ENCODE measurements at regions of chr12 and their contacts with region 1.

Region 1: GRCh38 chr12:12716793-12717585 is at the start of gene CDKN1B:
- DNase-seq: peak; percentile 76 to 92
- ATAC-seq: peak; percentile 68 to 85 (median 78)
- H3K4me3 ChIP-seq: peak within 1 kb of the TSS; percentile 100
- H3K4me3 Mint-ChIP-seq: peak within 1 kb of the TSS; percentile 98
- H3K27ac ChIP-seq: peak within 1 kb of the TSS; percentile 99
- H3K27ac Mint-ChIP-seq: peak within 1 kb of the TSS; percentile 99 to 100
- H3K4me1 ChIP-seq: peaks cover 41% of the 10 kb centered on the region
- H3K4me1 Mint-ChIP-seq: peaks cover 78 to 80% of the 10 kb centered on the region in 2 donors
- H3K27me3 ChIP-seq: no peaks in the 10 kb centered on the region
- H3K27me3 Mint-ChIP-seq: no peaks in the 10 kb centered on the region
- CTCF ChIP-seq: no peak
- total RNA-seq, gene CDKN1B: 119 to 207 (median 130) TPM

Region 2: GRCh38 chr12:11758510-11759493 is 958.2 kb before region 1 on chr12:
- intact Hi-C with region 1: no loop called
- DNase-seq: peak in 1 of 2 donors; percentile 15
- ATAC-seq: no peak
- H3K4me3 ChIP-seq: no peak overlapping the region
- H3K4me3 Mint-ChIP-seq: no peak overlapping the region
- H3K27ac ChIP-seq: peak overlapping the region; percentile 30
- H3K27ac Mint-ChIP-seq: peak overlapping the region in 1 of 2 donors; percentile 11
- H3K4me1 ChIP-seq: peaks cover 25% of the 10 kb centered on the region
- H3K4me1 Mint-ChIP-seq: peaks cover 10 to 14% of the 10 kb centered on the region in 2 donors
- H3K27me3 ChIP-seq: no peaks in the 10 kb centered on the region
- H3K27me3 Mint-ChIP-seq: no peaks in the 10 kb centered on the region
- CTCF ChIP-seq: no peak

Region 3: GRCh38 chr12:12356886-12357718 is 359.9 kb before region 1 on chr12 and contains the start of gene BORCS5:
- intact Hi-C with region 1: loop called (anchors 2 kb)
- DNase-seq: peak; percentile 95 to 99
- ATAC-seq: peak; percentile 92 to 98 (median 94)
- H3K4me3 ChIP-seq: peak within 1 kb of the TSS; percentile 78
- H3K4me3 Mint-ChIP-seq: peak within 1 kb of the TSS; percentile 96
- H3K27ac ChIP-seq: peak within 1 kb of the TSS; percentile 97
- H3K27ac Mint-ChIP-seq: peak within 1 kb of the TSS; percentile 92 to 97
- H3K4me1 ChIP-seq: peaks cover 23% of the 10 kb centered on the region
- H3K4me1 Mint-ChIP-seq: peaks cover 26 to 31% of the 10 kb centered on the region in 2 donors
- H3K27me3 ChIP-seq: no peaks in the 10 kb centered on the region
- H3K27me3 Mint-ChIP-seq: no peaks in the 10 kb centered on the region
- CTCF ChIP-seq: no peak
- total RNA-seq, gene BORCS5: 28.5 to 32.8 (median 29.2) TPM

Region 4: DNA sequence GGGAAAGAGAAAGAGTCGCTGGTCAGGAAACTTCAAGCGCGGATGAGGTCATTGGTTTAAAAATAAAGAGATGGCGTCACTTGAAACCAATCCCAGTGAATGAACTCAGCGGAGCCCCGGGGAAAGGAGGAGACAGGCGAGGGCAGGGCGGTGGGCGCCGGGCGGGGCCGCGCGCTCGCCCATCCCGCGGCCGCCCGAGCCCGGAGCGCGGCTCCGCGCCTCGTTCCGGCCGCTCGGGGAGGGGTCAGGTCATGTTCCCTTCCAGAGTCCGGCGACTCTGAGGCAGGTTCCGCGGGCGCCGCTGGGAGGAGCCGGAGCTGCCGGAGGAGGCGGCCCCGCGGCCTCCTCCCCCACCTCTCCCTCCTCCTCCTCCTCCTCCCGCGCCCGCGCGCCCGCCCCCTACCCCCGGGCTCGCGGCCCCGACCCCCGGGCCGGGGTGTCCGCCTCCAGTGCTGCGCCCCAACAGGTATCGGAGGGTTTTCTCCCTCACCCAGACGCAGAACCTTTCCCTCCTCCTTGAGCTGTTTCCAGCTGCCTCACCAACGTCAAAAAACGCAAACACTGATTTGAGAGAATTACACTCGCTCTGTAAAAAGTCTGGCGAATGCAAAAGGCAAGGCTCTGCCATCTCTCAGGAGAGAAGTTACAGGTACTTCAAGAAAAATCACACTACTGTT is 154.3 kb before region 1 on chr12 and contains the start of gene DUSP16:
- intact Hi-C with region 1: loop called (anchors 5 kb)
- DNase-seq: peak; percentile 74 to 93
- ATAC-seq: peak; percentile 74 to 92 (median 84)
- H3K4me3 ChIP-seq: peak within 1 kb of the TSS; percentile 67
- H3K4me3 Mint-ChIP-seq: peak within 1 kb of the TSS; percentile 95
- H3K27ac ChIP-seq: peak within 1 kb of the TSS; percentile 88
- H3K27ac Mint-ChIP-seq: peak within 1 kb of the TSS; percentile 90 to 96
- H3K4me1 ChIP-seq: peaks cover 10% of the 10 kb centered on the region
- H3K4me1 Mint-ChIP-seq: peaks cover 10 to 13% of the 10 kb centered on the region in 2 donors
- H3K27me3 ChIP-seq: no peaks in the 10 kb centered on the region
- H3K27me3 Mint-ChIP-seq: peaks cover 0 to 3% of the 10 kb centered on the region in 2 donors
- CTCF ChIP-seq: no peak
- total RNA-seq, gene DUSP16: 6.9 to 19.9 (median 10.0) TPM

Region 5: DNA sequence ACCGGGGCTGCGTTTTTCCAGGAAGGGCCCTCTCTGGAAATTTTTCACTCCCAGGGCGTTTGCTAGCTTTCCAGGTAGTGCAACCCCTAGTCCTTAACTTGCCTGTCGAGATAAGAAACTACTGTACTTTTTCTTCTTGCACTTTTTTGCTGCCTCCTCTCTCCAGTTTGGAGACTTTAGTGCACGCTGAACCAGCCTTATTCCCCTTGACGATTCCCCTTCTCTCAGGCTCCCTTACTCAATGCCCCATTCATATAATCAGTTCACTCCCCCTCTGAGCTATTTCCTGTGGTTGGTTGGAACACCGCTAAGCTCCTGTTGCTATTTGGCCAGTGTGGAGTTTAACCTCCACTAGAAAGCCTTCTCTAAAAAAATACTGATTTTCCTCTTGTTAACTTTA is 104.6 kb before region 1 on chr12:
- intact Hi-C with region 1: no loop called
- DNase-seq: peak in 1 of 2 donors; percentile 64
- ATAC-seq: no peak
- H3K4me3 ChIP-seq: peak overlapping the region; percentile 84
- H3K4me3 Mint-ChIP-seq: peak overlapping the region; percentile 90
- H3K27ac ChIP-seq: peak overlapping the region; percentile 87
- H3K27ac Mint-ChIP-seq: peak overlapping the region; percentile 90 to 98
- H3K4me1 ChIP-seq: peaks cover 17% of the 10 kb centered on the region
- H3K4me1 Mint-ChIP-seq: peaks cover 38 to 42% of the 10 kb centered on the region in 2 donors
- H3K27me3 ChIP-seq: no peaks in the 10 kb centered on the region
- H3K27me3 Mint-ChIP-seq: no peaks in the 10 kb centered on the region
- CTCF ChIP-seq: no peak

Region 6: GRCh38 chr12:12704593-12705230 is 12.3 kb before region 1 on chr12:
- intact Hi-C with region 1: no loop called
- DNase-seq: peak in 1 of 2 donors; percentile 80
- ATAC-seq: peak; percentile 90 to 99 (median 93)
- H3K4me3 ChIP-seq: no peak overlapping the region
- H3K4me3 Mint-ChIP-seq: peak overlapping the region; percentile 62
- H3K27ac ChIP-seq: no peak overlapping the region
- H3K27ac Mint-ChIP-seq: peak overlapping the region; percentile 68 to 77
- H3K4me1 ChIP-seq: peaks cover 23% of the 10 kb centered on the region
- H3K4me1 Mint-ChIP-seq: peaks cover 15 to 17% of the 10 kb centered on the region in 2 donors
- H3K27me3 ChIP-seq: no peaks in the 10 kb centered on the region
- H3K27me3 Mint-ChIP-seq: no peaks in the 10 kb centered on the region
- CTCF ChIP-seq: peak; percentile 82

Region 7: DNA sequence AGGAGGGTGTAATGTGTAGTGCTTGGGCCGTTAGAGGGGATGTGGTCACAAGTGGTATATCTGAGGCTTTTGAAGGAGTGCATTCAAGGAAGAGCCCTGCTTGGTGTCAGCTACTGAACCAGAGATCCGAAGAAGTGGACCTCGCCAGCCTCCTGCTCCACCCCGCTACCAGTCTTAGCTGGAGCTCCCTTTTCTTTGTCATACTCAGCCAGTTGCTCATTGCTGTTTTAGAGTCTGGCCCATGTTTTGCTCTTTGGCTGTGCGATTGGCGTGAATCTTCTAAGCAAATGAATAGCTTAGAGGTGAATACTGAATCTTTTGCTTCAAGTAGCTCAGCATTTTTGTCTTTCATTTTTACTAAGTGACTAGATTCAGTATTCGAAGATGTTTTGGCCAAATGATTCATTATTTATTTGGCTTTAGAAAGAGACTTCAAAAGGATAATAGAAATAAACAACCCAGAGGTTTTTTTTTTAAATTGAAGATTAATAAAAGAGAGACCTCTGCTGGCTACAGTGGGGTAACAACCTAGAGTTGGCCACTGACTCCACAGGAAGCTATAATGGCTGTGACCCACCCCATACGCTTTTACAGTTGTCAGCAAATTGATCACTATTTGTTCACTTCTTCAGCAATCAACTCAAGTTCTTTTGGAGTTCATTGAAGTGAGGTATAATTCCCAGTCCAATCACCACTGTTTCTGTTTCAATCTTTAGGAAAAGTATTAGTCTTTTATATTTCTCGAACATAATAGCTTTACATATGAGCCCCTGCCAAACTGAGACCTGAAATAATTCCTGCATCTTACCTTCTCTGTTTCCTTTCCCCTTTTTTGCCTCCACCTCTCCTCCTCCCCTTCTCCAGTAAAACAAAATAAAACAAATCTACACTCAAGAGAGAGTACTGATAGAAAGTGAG is 20.0 kb after region 1 on chr12:
- intact Hi-C with region 1: loop called (anchors 1 kb)
- DNase-seq: peak; percentile 59 to 80
- ATAC-seq: peak; percentile 85 to 93 (median 91)
- H3K4me3 ChIP-seq: peak overlapping the region; percentile 43
- H3K4me3 Mint-ChIP-seq: peak overlapping the region; percentile 77
- H3K27ac ChIP-seq: peak overlapping the region; percentile 92
- H3K27ac Mint-ChIP-seq: peak overlapping the region; percentile 94
- H3K4me1 ChIP-seq: peaks cover 30% of the 10 kb centered on the region
- H3K4me1 Mint-ChIP-seq: peaks cover 31% of the 10 kb centered on the region in 2 donors
- H3K27me3 ChIP-seq: no peaks in the 10 kb centered on the region
- H3K27me3 Mint-ChIP-seq: no peaks in the 10 kb centered on the region
- CTCF ChIP-seq: peak; percentile 73

Region 8: DNA sequence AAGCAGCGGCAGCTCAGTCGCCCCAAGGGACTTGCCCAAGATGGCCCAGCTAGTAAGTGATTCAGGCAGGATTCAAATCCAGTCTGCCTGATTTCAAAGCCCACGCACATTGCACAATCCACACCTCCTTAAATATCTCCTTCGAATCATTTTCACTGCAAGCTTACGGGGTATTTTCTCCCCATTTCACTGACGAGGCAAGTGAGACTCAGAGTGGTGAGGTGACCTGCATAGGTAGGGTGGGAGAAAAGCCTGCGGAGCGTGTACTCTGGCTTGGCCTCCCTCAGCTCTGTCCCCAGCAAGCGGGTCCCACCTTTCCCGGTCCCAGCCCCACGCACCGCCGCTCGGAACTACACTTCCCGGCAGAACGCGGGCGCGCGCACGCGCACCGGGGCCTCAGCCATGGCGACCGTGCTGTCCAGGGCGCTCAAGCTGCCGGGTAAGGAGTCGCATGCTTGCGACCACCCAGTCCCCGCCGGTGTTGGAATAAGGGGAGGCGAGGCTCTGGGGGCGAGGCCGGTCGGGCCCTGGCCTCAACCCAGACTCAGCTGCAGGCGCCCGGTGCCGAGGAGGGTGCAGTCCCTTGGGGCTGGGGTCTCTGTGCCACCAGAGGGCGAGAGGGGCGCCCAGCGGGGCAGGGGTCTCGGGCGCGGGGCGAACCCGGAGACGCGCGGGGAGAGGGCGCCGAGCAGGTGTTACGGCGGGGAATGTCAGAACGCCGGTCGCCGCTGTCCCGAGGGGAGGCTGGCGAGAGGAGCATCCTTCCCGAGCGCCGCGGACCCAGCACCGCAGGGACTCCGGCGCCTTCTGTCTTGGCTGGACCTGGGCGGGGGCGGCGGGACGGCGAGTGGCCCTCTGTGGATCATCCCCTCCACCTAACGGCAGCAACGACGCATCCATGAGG is 327.3 kb after region 1 on chr12 and contains the start of gene FAM234B:
- intact Hi-C with region 1: no loop called
- DNase-seq: peak; percentile 60 to 83
- ATAC-seq: peak; percentile 88 to 99 (median 95)
- H3K4me3 ChIP-seq: peak within 1 kb of the TSS; percentile 94
- H3K4me3 Mint-ChIP-seq: peak within 1 kb of the TSS; percentile 89
- H3K27ac ChIP-seq: no peak within 1 kb of the TSS
- H3K27ac Mint-ChIP-seq: peak within 1 kb of the TSS in 1 of 2 donors; percentile 79
- H3K4me1 ChIP-seq: peaks cover 10% of the 10 kb centered on the region
- H3K4me1 Mint-ChIP-seq: peaks cover 5 to 10% of the 10 kb centered on the region in 2 donors
- H3K27me3 ChIP-seq: no peaks in the 10 kb centered on the region
- H3K27me3 Mint-ChIP-seq: peaks cover 9 to 19% of the 10 kb centered on the region in 2 donors
- CTCF ChIP-seq: no peak
- total RNA-seq, gene FAM234B: 5.5 to 8.7 (median 6.6) TPM

Measured in natural killer cell (primary cell).